HEK293 (cell line): ENCODE measurements at regions of chr3 and their contacts with region 1.

Region 1: GRCh38 chr3:107676469-107677309 is 153.9 kb downstream of the BBX start:
- H3K4me3 ChIP-seq: no peak overlapping the region
- H3K27ac ChIP-seq: no peak overlapping the region
- H3K4me1 ChIP-seq: no peaks in the 10 kb centered on the region; the same call in 1 of the 2 replicates
- CTCF ChIP-seq: no peak

Region 2: DNA sequence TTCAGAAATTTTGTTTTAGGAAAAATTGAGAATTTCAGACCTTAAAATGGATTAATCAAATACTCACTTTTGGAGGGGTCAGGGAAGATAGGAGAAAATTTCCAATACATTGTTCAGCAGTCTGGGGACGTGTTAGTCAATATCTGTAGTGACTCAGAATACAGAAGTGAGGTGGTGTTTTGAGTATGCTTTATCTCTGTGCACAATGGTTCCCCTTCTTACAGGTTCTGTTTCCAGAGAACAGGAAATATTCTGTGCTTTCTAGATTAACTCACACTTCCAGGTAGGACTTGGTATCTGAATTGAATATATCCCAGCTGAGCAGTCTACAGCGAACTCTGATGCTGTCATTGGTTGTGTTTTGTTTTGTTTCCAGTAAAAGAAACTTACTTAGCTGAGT is 330.1 kb before region 1 on chr3:
- CTCF ChIA-PET with region 1: no interaction called
- POLR2A ChIA-PET with region 1: no interaction called
- H3K4me3 ChIP-seq: no peak overlapping the region
- H3K27ac ChIP-seq: no peak overlapping the region
- H3K4me1 ChIP-seq: no peaks in the 10 kb centered on the region
- CTCF ChIP-seq: no peak

Region 3: GRCh38 chr3:107377151-107377550 is 299.5 kb before region 1 on chr3 and contains the start of gene CCDC54:
- CTCF ChIA-PET with region 1: no interaction called
- POLR2A ChIA-PET with region 1: no interaction called
- H3K4me3 ChIP-seq: no peak within 1 kb of the TSS
- H3K27ac ChIP-seq: no peak within 1 kb of the TSS
- H3K4me1 ChIP-seq: no peaks in the 10 kb centered on the region
- CTCF ChIP-seq: no peak

Region 4: GRCh38 chr3:107660306-107660976 is 16.2 kb before region 1 on chr3:
- CTCF ChIA-PET with region 1: interaction called, 42 read pairs
- POLR2A ChIA-PET with region 1: no interaction called
- H3K4me3 ChIP-seq: no peak overlapping the region
- H3K27ac ChIP-seq: no peak overlapping the region
- H3K4me1 ChIP-seq: no peaks in the 10 kb centered on the region; the same call in 1 of the 2 replicates
- CTCF ChIP-seq: no peak

Region 5: DNA sequence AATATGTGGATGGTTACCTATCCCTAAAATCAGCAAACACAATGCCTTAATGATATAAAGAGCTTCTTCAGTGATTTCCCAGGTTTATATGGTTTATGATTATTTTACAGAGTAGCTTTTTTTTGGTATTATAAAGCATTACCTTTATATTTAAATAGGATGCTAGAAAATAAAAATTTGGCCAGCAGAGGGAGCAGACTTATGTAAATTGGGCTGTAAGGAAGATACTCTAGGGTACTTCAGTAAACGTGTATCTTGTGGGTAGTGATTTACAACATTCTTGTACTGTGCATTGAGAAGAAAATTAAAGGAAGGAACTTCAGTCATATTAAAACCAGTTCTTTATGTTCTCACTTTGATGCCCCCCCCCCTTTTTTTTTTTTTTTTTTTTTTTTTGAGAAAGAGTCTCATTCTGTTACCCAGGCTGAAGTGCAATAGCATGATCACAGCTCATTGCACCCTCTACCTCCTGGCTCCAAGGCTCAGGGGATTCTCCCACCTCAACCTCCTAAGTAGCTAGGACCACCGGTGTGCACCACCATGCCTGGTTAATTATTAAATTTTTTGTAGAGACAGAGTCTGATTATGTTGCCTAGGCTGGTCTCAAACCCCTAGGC is 13.9 kb after region 1 on chr3:
- CTCF ChIA-PET with region 1: interaction called, 48 read pairs
- POLR2A ChIA-PET with region 1: no interaction called
- H3K4me3 ChIP-seq: no peak overlapping the region
- H3K27ac ChIP-seq: no peak overlapping the region
- H3K4me1 ChIP-seq: no peaks in the 10 kb centered on the region
- CTCF ChIP-seq: no peak

Region 6: DNA sequence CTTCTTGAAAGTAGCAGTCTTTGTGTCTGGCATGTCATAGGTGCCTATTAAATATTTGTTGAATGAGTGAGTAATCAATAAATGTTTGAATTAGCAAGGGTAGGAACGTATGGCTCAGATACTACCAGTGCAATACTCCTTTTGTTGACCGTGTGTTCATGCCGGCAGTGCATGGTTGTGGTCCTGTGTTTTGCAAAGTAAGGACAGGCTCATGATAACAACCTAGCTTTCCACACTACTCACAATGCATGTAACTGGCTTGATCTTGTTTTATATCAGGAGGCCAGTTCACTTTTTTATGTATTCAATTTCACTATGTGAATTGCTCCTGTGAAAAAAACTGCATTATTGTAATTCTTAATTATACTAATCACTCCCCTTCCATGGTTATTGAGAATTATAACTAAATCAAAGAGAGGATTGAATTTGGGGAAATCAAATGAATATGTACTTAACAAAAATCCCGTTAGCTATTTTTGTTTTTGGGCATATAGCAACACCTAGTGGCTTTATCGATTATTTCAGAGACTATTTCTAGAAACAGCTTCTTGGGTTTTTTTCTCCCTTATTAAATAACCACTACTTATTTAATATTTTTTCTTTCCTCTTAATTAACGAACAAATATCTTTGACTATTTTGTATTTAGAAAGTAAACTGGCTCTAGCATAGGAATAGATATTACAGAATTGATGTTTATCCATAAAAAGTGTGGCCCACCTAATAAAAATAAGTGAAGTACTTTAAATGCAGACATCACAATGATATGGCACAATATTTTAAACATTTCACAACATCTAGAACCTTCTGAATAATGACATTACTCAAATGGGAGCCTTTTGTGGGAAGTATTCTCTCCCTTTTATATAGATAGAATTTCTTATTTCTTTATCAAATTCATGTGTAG is 64.6 kb after region 1 on chr3:
- CTCF ChIA-PET with region 1: interaction called, 28 read pairs
- POLR2A ChIA-PET with region 1: no interaction called
- H3K4me3 ChIP-seq: no peak overlapping the region
- H3K27ac ChIP-seq: no peak overlapping the region
- H3K4me1 ChIP-seq: no peaks in the 10 kb centered on the region
- CTCF ChIP-seq: 0 out of 2 replicates have a peak, but pooled peaks have one; percentile 8

Region 7: DNA sequence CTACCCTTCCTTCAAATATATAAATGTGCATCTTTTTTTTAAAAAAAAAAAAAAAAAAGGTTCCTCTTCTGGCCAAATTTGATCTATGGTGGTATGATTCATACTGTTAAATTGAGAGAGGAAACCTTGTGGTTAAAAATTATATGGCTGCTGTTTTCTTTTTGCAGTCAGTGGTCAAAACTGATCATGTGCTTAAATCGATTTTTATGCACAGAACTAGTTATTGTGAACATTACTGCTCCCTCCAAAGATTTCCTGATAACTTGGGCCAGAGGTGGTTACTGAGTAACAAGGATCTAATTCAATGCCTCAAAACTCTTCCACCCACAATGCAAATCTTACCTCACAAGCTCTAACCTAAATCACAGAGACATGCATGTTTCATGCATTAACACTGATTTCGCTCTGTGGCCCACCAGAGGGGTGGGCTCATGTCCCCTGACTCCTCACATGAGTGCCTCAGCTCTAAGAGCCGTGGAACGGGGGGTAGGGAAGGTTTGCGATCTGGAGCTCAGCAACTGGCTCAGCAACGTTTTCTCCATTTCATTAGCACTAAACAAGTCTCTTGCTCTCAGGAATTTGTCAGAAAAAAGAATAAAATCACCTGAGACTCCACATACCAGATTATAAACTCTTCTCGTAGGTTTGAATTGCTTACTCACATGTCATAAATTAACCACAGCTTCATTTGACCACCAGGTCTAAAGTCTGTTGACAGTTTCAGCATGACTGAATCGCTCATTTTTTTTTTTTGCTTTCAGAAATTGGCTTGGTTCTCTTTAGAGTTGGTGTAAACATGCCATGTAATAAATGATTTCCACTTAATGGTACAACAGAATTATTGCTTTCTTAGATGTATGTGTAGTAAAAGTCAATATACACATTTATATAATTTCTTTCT is 133.7 kb after region 1 on chr3:
- CTCF ChIA-PET with region 1: no interaction called
- POLR2A ChIA-PET with region 1: no interaction called
- H3K4me3 ChIP-seq: no peak overlapping the region
- H3K27ac ChIP-seq: no peak overlapping the region
- H3K4me1 ChIP-seq: no peaks in the 10 kb centered on the region
- CTCF ChIP-seq: no peak